Endothelial cell of umbilical vein (primary cell): ENCODE measurements at regions of chr5 and their contacts with region 1.

Region 1: GRCh38 chr5:58582803-58583491 is at the start of gene RAB3C:
- DNase-seq: peak; percentile 97
- H3K4me3 ChIP-seq: peak within 1 kb of the TSS; percentile 45 to 93 (median 80)
- H3K27ac ChIP-seq: no peak within 1 kb of the TSS
- H3K4me1 ChIP-seq: peaks cover 15% of the 10 kb centered on the region
- H3K27me3 ChIP-seq: peaks cover 18 to 40% of the 10 kb centered on the region in 2 experiments
- CTCF ChIP-seq: no peak
- POLR2A ChIP-seq: no peak
- total RNA-seq, gene RAB3C: 0.04 TPM in 1 of 2 replicates, not detected in the other

Region 2: DNA sequence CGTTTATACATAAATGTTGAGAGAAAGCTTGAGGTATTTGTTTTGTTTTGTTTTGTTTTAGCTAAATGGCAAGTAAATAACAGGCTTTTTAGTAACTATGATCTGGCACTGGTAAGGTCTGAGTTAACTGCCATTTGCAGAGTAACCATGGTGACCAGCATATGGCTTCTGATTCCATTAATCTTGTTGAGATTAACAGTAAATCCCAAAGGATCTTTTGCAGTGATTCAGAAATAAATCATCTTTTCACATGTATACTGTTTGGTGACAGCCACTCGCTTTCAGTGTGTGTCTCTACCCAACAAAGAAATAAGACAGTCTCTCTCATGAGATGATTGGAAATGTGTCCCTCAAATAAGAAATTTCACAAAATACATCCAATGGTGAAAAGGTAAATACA is 235.5 kb after region 1 on chr5:
- CTCF ChIA-PET with region 1: interaction called, 10 read pairs
- POLR2A ChIA-PET with region 1: no interaction called
- dilution Hi-C with region 1: no loop called
- intact Hi-C with region 1: loop called (anchors 1 kb)
- DNase-seq: no peak
- H3K4me3 ChIP-seq: no peak overlapping the region
- H3K27ac ChIP-seq: no peak overlapping the region
- H3K4me1 ChIP-seq: no peaks in the 10 kb centered on the region
- H3K27me3 ChIP-seq: no peaks in the 10 kb centered on the region
- CTCF ChIP-seq: no peak
- POLR2A ChIP-seq: no peak